ENCODE measurements at regions of chr21 and their contacts with region 1.

Region 1: DNA sequence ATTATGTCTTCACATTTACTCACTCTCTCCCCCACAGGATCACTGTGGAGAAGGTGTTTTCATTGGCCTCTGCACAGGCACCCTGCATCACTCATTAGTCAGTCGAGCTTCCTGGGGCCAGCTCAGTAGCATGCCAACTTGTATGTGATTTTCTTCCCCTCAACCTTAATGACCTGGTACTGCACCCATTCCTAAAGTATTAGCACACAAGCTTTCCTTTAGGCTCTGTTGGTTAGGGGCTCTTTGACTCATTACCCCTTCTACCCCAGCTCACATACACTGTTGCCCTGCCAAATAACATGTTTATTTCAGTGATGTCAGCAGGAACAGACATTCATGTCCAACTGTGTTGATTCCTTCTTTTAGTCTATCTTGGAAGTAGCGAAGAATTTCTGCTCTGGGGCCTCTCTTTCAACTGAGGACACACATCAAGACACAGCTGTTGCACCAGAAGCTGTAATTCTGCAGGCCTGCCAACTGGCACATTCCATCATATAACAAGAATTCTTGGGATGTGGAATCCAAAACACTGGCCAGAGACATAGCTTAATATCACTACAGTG is 603.5 kb upstream of the ADAMTS5 start:
- DNase-seq: peak; percentile 96
- H3K4me3 ChIP-seq: peak overlapping the region in 1 of 3 experiments; percentile 2
- H3K27ac ChIP-seq: peak overlapping the region; percentile 93
- H3K4me1 ChIP-seq: peaks cover 38% of the 10 kb centered on the region
- H3K27me3 ChIP-seq: no peaks in the 10 kb centered on the region
- CTCF ChIP-seq: no peak

Region 2: GRCh38 chr21:27423038-27423437 is 147.3 kb before region 1 on chr21:
- CTCF ChIA-PET with region 1: no interaction called
- dilution Hi-C with region 1: no loop called
- in situ Hi-C with region 1: no loop called
- intact Hi-C with region 1: loop called (anchors 5 kb)
- DNase-seq: peak; percentile 90
- H3K4me3 ChIP-seq: no peak overlapping the region
- H3K27ac ChIP-seq: peak overlapping the region; percentile 62
- H3K4me1 ChIP-seq: peaks cover 40% of the 10 kb centered on the region
- H3K27me3 ChIP-seq: no peaks in the 10 kb centered on the region
- CTCF ChIP-seq: no peak

Region 3: DNA sequence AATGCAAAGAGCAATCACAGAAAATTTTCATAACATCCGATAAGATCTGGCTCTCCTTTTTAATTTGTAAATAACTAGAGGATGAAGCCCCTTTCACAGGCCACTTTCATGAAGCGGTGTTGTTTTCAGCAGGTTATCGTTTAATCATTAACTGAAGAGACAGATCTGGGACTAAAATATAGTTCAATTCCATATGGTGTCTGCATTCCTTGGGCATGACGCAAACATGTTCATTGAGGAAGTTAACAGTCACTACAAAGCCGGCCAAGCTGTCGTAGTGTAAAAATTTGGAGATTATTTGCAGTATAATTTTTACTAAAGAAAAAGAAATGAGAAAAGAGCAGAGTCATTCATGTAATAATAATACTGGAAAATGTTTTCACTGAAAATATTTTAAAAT is 38.3 kb before region 1 on chr21:
- CTCF ChIA-PET with region 1: no interaction called
- dilution Hi-C with region 1: no loop called
- in situ Hi-C with region 1: no loop called
- intact Hi-C with region 1: no loop called
- DNase-seq: no peak
- H3K4me3 ChIP-seq: no peak overlapping the region
- H3K27ac ChIP-seq: no peak overlapping the region
- H3K4me1 ChIP-seq: no peaks in the 10 kb centered on the region
- H3K27me3 ChIP-seq: no peaks in the 10 kb centered on the region
- CTCF ChIP-seq: no peak

Region 4: DNA sequence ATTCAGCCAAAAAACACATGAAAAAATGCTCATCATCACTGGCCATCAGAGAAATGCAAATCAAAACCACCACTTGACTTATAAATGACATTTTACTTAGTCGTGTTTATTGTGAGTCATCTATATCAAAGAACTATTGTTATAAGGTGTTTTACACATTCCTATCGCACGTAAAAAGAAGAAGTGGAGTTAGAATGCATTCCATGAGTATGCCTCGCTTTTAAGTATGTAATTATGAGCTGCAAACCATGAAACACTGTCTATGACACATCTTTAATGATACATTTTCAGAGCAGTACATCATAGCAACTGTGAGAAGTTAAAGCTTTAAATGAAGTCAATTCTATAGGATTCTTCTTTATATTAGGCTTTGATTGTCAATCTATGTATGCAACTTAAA is 10.8 kb after region 1 on chr21:
- CTCF ChIA-PET with region 1: no interaction called
- dilution Hi-C with region 1: no loop called
- in situ Hi-C with region 1: no loop called
- intact Hi-C with region 1: loop called (anchors 1 kb)
- DNase-seq: peak; percentile 92
- H3K4me3 ChIP-seq: no peak overlapping the region
- H3K27ac ChIP-seq: peak overlapping the region; percentile 89
- H3K4me1 ChIP-seq: peaks cover 22% of the 10 kb centered on the region
- H3K27me3 ChIP-seq: no peaks in the 10 kb centered on the region
- CTCF ChIP-seq: no peak

Region 5: GRCh38 chr21:27633631-27634030 is 63.2 kb after region 1 on chr21:
- CTCF ChIA-PET with region 1: no interaction called
- dilution Hi-C with region 1: no loop called
- in situ Hi-C with region 1: no loop called
- intact Hi-C with region 1: no loop called
- DNase-seq: no peak
- H3K4me3 ChIP-seq: no peak overlapping the region
- H3K27ac ChIP-seq: no peak overlapping the region
- H3K4me1 ChIP-seq: no peaks in the 10 kb centered on the region
- H3K27me3 ChIP-seq: no peaks in the 10 kb centered on the region
- CTCF ChIP-seq: no peak

Region 6: DNA sequence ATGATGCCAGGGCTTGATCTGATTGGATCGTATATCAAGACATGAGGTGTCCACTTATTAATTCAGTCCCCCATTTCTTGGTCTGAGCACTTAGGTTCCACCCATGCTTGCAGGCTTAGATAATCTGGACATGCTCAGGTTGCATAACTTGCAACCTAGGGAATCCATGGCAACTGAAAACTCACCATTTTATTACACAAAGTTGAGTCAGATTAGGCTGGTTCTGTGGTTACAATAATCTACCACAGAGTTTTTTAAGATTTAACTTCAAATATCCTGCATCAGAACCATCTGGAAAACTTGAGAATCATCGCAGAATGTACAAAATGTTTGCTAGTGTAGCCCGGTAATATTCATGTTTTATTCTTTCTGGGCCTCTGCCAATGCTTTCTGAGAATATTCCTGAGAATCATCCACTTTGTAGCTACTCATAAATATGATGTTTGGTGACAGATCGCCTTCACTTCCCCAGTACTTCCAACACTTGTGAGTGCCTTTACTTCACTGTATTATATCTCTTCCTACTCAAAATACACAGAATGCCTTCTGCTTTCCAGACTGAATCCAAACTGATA is 103.7 kb after region 1 on chr21:
- CTCF ChIA-PET with region 1: no interaction called
- dilution Hi-C with region 1: loop called (anchors 5 kb)
- in situ Hi-C with region 1: no loop called
- intact Hi-C with region 1: no loop called
- DNase-seq: peak; percentile 83
- H3K4me3 ChIP-seq: no peak overlapping the region
- H3K27ac ChIP-seq: peak overlapping the region; percentile 60
- H3K4me1 ChIP-seq: peaks cover 10% of the 10 kb centered on the region
- H3K27me3 ChIP-seq: no peaks in the 10 kb centered on the region
- CTCF ChIP-seq: no peak

Region 7: DNA sequence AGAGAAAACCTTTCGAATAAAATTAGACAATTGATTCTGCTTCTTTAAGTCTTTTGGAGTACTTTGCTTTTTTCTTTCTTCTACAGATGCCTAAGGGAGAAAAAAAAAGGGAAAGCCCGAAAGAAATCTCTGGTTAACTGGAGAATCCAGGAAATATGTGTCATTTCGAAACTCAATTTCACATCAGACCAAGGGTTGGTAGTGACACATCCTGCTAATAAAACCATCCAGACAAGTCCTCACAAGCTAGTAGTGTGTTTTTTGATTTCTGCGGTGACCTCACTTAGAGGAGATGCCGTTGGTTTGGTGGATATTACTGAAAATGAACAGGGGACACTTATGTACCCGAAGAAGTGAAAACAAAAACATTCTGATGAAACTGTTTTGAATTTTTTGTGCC is 123.0 kb after region 1 on chr21:
- CTCF ChIA-PET with region 1: interaction called, 4 read pairs
- dilution Hi-C with region 1: no loop called
- in situ Hi-C with region 1: loop called (anchors 5 to 10 kb)
- intact Hi-C with region 1: loop called (anchors 1 kb)
- DNase-seq: peak; percentile 98
- H3K4me3 ChIP-seq: no peak overlapping the region
- H3K27ac ChIP-seq: peak overlapping the region; percentile 98
- H3K4me1 ChIP-seq: peaks cover 18% of the 10 kb centered on the region
- H3K27me3 ChIP-seq: no peaks in the 10 kb centered on the region
- CTCF ChIP-seq: no peak

Region 8: GRCh38 chr21:28633839-28634555 is 1063.6 kb after region 1 on chr21:
- CTCF ChIA-PET with region 1: no interaction called
- dilution Hi-C with region 1: loop called (anchors 10 kb)
- in situ Hi-C with region 1: no loop called
- intact Hi-C with region 1: loop called (anchors 1 kb)
- DNase-seq: peak; percentile 89
- H3K4me3 ChIP-seq: no peak overlapping the region
- H3K27ac ChIP-seq: peak overlapping the region; percentile 98
- H3K4me1 ChIP-seq: peaks cover 66% of the 10 kb centered on the region
- H3K27me3 ChIP-seq: no peaks in the 10 kb centered on the region
- CTCF ChIP-seq: no peak

Measured in mammary epithelial cell (primary cell).